ENCODE measurements at regions of chr1 and their contacts with region 1.

Region 1: GRCh38 chr1:23188434-23188884 is 19.8 kb upstream of the LUZP1 start:
- DNase-seq: no peak
- H3K4me3 ChIP-seq: no peak overlapping the region
- H3K27ac ChIP-seq: peak overlapping the region; percentile 47
- H3K4me1 ChIP-seq: peaks cover 7% of the 10 kb centered on the region
- H3K27me3 ChIP-seq: no peaks in the 10 kb centered on the region

Region 2: DNA sequence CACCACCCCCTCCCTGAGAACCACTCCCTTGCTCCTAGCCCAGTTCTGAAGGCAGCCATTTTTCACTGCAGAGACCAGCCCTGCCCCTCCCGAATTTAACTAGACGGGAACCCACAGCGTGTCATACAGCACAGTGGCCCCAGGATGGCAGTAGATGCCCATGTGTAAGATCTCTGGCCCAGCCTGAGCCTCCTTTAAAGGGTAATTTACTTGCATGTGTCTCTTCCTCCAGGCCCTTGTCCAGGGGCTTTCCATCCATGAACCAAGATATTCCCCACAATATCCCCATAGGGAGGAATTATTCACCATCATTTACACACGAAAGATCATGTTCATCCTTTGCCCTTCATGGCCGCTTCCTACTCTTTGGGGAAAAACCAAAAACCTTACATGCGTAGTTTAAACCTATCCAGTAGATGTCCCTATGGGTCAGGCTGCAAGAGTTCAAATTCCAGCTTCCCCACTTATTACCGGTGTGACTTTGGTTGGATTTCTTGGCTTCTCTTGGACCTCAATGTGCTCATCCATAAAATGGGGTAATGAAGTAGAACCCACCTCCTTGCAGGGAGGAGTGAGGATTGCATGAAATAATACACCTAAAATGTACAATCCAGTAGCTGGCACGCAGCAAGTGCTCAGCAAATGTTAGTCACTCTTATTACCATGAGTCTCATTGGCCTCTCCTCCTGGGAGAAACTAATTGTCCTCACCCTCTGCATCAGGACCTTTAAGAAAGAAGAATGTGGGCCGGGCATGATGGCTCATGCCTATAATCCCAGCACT is 211.8 kb before region 1 on chr1:
- in situ Hi-C with region 1: loop called (anchors 5 kb)
- DNase-seq: peak; percentile 94
- H3K4me3 ChIP-seq: no peak overlapping the region
- H3K27ac ChIP-seq: no peak overlapping the region
- H3K4me1 ChIP-seq: peaks cover 8% of the 10 kb centered on the region
- H3K27me3 ChIP-seq: no peaks in the 10 kb centered on the region

Region 3: DNA sequence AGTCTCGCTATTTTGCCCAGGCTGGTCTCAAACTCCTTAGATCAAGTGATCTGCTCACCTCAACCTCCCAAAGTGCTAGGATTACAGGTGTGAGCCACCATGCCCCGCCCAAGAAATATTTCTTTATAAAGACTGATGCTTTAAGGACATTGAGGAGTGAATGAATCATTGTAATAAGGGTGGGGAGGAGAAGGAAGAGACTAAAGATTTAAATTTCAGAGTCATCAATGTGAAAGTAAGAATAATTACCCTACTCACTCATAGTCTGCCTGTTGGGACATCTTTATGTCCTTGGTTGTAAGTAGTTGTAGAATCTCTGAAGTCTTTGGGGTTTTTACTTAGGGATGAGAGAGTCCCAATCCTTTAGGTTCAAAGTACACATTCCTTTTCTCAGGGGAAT is 161.9 kb before region 1 on chr1:
- in situ Hi-C with region 1: no loop called
- DNase-seq: peak; percentile 20
- H3K4me3 ChIP-seq: no peak overlapping the region
- H3K27ac ChIP-seq: no peak overlapping the region
- H3K4me1 ChIP-seq: no peaks in the 10 kb centered on the region
- H3K27me3 ChIP-seq: no peaks in the 10 kb centered on the region

Region 4: GRCh38 chr1:23037081-23037740 is 151.2 kb before region 1 on chr1:
- in situ Hi-C with region 1: no loop called
- DNase-seq: peak; percentile 14
- H3K4me3 ChIP-seq: no peak overlapping the region
- H3K27ac ChIP-seq: no peak overlapping the region
- H3K4me1 ChIP-seq: peaks cover 9% of the 10 kb centered on the region; the same call in 1 of the 2 replicates
- H3K27me3 ChIP-seq: no peaks in the 10 kb centered on the region

Region 5: DNA sequence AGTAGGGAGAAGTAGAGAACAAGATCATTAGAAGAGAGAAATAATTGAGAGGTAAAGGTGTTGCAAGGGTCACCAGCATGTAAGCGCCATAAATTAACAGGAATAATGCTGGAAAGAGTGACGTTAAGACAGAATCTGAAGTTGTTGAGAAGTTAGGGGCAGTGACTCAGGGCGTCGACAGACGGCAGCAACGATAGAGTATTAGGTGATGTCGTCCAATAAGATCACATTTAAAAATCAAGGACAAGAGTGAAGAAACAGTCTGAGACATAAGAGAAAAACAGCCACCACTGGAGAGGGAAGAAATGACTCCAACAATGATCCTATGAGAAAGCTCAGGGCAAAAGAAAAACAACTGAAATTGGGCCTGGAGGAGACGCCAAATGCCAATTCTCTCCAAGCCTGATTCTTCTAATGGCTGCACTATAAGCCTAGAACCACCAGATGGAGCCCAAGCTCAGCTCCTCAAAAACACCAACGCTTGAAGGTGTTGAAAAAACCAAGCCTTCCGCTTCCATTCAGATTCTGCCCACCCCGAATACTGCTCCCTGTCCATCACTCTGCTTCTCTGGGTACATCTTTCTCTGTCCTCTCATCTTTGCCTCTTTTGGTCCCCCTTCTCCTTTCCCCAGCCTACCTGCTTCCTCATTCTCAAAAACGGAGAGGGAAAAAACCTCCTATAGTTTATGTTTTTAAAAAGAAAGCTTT is 89.8 kb before region 1 on chr1:
- in situ Hi-C with region 1: loop called (anchors 5 kb)
- DNase-seq: peak; percentile 86
- H3K4me3 ChIP-seq: no peak overlapping the region
- H3K27ac ChIP-seq: peak overlapping the region; percentile 87
- H3K4me1 ChIP-seq: peaks cover 55% of the 10 kb centered on the region
- H3K27me3 ChIP-seq: no peaks in the 10 kb centered on the region

Measured in GM23248 (cell line).